ENCODE measurements at regions of chr19 and their contacts with region 1.

Region 1: DNA sequence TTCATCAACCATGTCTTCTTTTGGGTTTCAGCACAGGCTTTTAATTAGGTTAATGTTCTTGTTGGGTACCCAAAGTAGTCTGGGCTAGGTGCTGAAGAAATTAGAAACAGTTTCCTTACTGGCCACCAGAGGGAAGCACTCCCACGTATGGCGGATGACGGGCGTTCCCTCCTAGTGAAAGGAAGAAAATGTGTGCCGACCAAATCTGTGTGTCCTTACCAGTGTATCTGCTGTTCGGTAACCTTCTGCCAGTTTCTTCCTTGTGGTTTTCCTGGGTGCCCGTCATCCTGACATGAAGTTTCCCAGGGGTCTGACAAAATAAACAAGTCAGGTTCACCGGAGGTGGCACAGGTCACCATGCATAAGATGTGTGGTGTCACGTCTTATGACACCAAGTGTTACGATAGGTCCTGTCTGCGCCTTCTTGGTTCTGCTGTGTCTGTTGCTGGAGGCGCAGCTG is 6.0 kb upstream of the WDR88 start:
- DNase-seq: peak; percentile 16
- ATAC-seq: peak; percentile 93
- H3K4me3 ChIP-seq: no peak overlapping the region
- H3K27ac ChIP-seq: no peak overlapping the region
- H3K4me1 ChIP-seq: no peaks in the 10 kb centered on the region
- H3K27me3 ChIP-seq: no peaks in the 10 kb centered on the region
- CTCF ChIP-seq: peak; percentile 79 to 86 (median 82)
- EP300 ChIP-seq: no peak
- POLR2A ChIP-seq: no peak
- RAD21 ChIP-seq: peak; percentile 74

Region 2: GRCh38 chr19:33114302-33114701 is 11.7 kb before region 1 on chr19:
- CTCF ChIA-PET with region 1: interaction called, 10 read pairs
- POLR2A ChIA-PET with region 1: no interaction called
- RAD21 ChIA-PET with region 1: no interaction called
- SMC1A ChIA-PET with region 1: no interaction called
- in situ Hi-C with region 1: no loop called
- intact Hi-C with region 1: no loop called
- DNase-seq: no peak
- ATAC-seq: no peak
- H3K4me3 ChIP-seq: no peak overlapping the region
- H3K27ac ChIP-seq: no peak overlapping the region
- H3K4me1 ChIP-seq: no peaks in the 10 kb centered on the region
- H3K27me3 ChIP-seq: no peaks in the 10 kb centered on the region
- CTCF ChIP-seq: no peak
- EP300 ChIP-seq: no peak
- POLR2A ChIP-seq: no peak
- RAD21 ChIP-seq: no peak

Region 3: GRCh38 chr19:33186431-33187182 is 60.6 kb after region 1 on chr19:
- CTCF ChIA-PET with region 1: interaction called, 51 read pairs
- POLR2A ChIA-PET with region 1: no interaction called
- RAD21 ChIA-PET with region 1: interaction called, 12 read pairs
- SMC1A ChIA-PET with region 1: interaction called, 7 read pairs
- in situ Hi-C with region 1: no loop called
- intact Hi-C with region 1: no loop called
- DNase-seq: no peak
- ATAC-seq: no peak
- H3K4me3 ChIP-seq: no peak overlapping the region
- H3K27ac ChIP-seq: no peak overlapping the region
- H3K4me1 ChIP-seq: no peaks in the 10 kb centered on the region
- H3K27me3 ChIP-seq: peaks cover 0 to 1% of the 10 kb centered on the region in 2 experiments; a peak in 1 of 4 replicates
- CTCF ChIP-seq: no peak
- EP300 ChIP-seq: no peak
- POLR2A ChIP-seq: no peak
- RAD21 ChIP-seq: no peak

Region 4: DNA sequence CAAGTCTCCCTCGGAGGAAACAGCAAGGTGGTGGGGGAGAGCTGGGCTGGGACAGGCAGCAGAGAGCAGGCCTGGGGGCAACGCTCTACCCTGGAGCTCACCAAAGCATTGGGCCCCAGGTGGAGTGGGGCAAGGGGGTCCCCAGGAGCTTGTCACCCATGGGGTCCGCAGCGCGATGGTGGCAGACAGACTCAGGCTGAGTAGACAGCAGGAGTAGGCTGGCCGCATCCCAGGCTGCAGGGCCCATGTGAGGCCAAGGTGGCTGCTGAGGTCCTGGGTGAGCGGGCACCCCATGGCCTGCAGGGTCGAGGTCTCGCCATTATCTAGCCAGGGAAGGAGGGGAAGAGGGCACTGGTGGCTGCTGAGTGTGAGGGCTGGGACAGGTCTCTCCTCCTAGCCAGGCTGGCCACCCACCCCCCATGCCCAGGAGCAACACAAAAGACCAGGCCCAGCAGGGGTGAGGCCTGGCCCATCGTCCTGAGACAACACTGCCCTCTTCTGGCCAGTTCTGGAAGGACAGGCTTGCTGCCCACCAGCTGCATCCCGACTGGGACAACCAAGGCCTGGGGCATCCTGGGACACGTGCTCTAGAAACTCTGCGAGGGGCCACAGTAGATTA is 280.7 kb after region 1 on chr19:
- CTCF ChIA-PET with region 1: interaction called, 5 read pairs
- POLR2A ChIA-PET with region 1: no interaction called
- RAD21 ChIA-PET with region 1: no interaction called
- SMC1A ChIA-PET with region 1: interaction called, 3 read pairs
- in situ Hi-C with region 1: no loop called
- intact Hi-C with region 1: loop called (anchors 5 kb)
- DNase-seq: no peak
- ATAC-seq: peak; percentile 94
- H3K4me3 ChIP-seq: no peak overlapping the region
- H3K27ac ChIP-seq: no peak overlapping the region
- H3K4me1 ChIP-seq: 0 out of 2 replicates have a peak, but pooled peaks cover 4% of the 10 kb centered on the region
- H3K27me3 ChIP-seq: no peaks in the 10 kb centered on the region
- CTCF ChIP-seq: peak; percentile 87 to 92 (median 87)
- EP300 ChIP-seq: no peak
- POLR2A ChIP-seq: no peak
- RAD21 ChIP-seq: peak; percentile 85